Aorta (tissue), 5 donors: ENCODE measurements at regions of chr10 and their contacts with region 1.

Region 1: DNA sequence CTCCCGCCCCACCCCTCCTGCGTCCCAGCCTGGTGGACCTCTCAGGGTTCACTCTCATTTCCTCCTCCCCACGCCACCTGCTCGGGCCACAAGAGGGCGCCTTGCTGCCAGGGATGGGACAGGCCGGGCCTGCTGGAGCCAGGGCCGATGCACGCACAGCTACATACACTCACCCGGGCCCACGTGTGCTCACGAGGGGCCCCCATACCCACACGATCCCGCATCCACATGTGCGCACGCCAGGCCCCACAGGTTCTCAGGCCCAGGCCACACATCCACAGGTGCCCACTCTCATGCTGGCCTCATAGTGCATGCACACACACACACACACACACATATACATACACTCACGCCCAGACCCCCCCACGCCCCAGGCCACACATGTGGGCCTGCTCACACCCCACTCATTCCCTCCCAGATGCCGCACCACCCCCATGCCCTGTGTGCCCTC is 68.6 kb downstream of the LHPP start:
- DNase-seq: peak; percentile 91 to 95
- ATAC-seq: peak; percentile 87
- H3K4me3 ChIP-seq: no peak overlapping the region
- H3K27ac ChIP-seq: no peak overlapping the region
- H3K4me1 ChIP-seq: no peaks in the 10 kb centered on the region
- H3K27me3 ChIP-seq: no peaks in the 10 kb centered on the region

Region 2: DNA sequence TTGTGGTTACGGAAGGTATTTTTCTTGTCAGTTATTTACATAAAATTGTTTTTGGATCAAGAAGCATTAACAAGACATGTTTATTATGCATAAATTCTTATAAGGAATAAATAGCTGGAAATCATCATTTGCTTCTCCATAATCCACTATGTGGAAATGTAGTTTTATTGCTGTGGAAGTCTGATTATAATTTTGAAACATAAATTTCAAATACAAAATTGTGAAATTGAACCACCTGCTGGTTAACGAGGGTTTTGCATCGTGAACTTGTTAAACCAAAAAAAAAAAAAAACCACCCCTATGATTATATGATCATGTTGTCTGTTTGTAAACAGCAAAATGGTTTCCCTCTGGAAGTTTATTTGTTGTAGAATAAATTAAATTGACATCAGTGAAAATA is 297.2 kb after region 1 on chr10:
- intact Hi-C with region 1: loop called (anchors 5 kb)
- DNase-seq: no peak
- ATAC-seq: no peak
- H3K4me3 ChIP-seq: no peak overlapping the region
- H3K27ac ChIP-seq: no peak overlapping the region
- H3K4me1 ChIP-seq: no peaks in the 10 kb centered on the region
- H3K27me3 ChIP-seq: no peaks in the 10 kb centered on the region